Naive thymus-derived CD8-positive, alpha-beta T cell (primary cell): ENCODE measurements at regions of chr6 and their contacts with region 1.

Region 1: GRCh38 chr6:35731736-35732532 is 4.9 kb upstream of the ARMC12 start:
- DNase-seq: peak; percentile 85 to 97 (median 95)
- ATAC-seq: peak; percentile 48 to 54
- H3K4me3 Mint-ChIP-seq: peak overlapping the region; percentile 67 to 93 (median 90)
- H3K27ac Mint-ChIP-seq: peak overlapping the region; percentile 91 to 99 (median 97)
- H3K4me1 Mint-ChIP-seq: peaks cover 42 to 86% (median 84%) of the 10 kb centered on the region in 4 donors
- H3K27me3 Mint-ChIP-seq: no peaks in the 10 kb centered on the region

Region 2: DNA sequence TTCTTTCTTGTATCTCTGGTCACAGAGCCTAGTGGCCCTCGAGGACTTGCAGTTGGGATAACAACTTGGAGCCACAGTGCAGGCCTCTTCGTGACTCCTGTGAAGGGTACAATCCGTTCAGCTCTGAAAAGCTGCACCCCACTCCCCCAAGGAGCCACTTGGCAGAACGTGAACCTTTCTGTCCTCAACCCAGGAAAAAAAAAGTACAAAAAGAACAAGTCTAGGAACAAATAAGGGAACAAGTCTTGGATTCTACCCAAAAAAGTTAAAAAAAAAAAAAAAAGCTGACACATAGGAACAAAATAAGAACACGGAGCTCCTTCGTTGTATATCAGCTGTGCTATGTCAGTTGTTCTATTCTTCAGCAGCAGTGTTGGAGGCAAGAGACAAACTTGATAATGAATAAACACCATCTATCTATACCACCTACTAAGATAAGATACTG is 141.3 kb before region 1 on chr6:
- POLR2A ChIA-PET with region 1: interaction called, 12 read pairs
- DNase-seq: no peak
- ATAC-seq: no peak
- H3K4me3 Mint-ChIP-seq: peak overlapping the region in 9 of 10 donors; percentile 22 to 69 (median 44)
- H3K27ac Mint-ChIP-seq: peak overlapping the region; percentile 78 to 96 (median 94)
- H3K4me1 Mint-ChIP-seq: peaks cover 32 to 96% (median 91%) of the 10 kb centered on the region in 4 donors
- H3K27me3 Mint-ChIP-seq: no peaks in the 10 kb centered on the region

Region 3: GRCh38 chr6:35611240-35611639 is 120.7 kb before region 1 on chr6:
- POLR2A ChIA-PET with region 1: interaction called, 12 read pairs
- DNase-seq: peak in 4 of 10 donors; percentile 54 to 68 (median 62)
- ATAC-seq: peak; percentile 76 to 92
- H3K4me3 Mint-ChIP-seq: peak overlapping the region; percentile 52 to 85 (median 72)
- H3K27ac Mint-ChIP-seq: peak overlapping the region; percentile 88 to 97 (median 92)
- H3K4me1 Mint-ChIP-seq: peaks cover 33 to 89% (median 78%) of the 10 kb centered on the region in 4 donors
- H3K27me3 Mint-ChIP-seq: no peaks in the 10 kb centered on the region

Region 4: GRCh38 chr6:35642471-35643161 is 89.3 kb before region 1 on chr6:
- POLR2A ChIA-PET with region 1: interaction called, 10 read pairs
- DNase-seq: peak in 5 of 10 donors; percentile 17 to 65 (median 43)
- ATAC-seq: peak; percentile 84 to 93
- H3K4me3 Mint-ChIP-seq: peak overlapping the region in 5 of 10 donors; percentile 9 to 42 (median 30)
- H3K27ac Mint-ChIP-seq: peak overlapping the region; percentile 11 to 92 (median 81)
- H3K4me1 Mint-ChIP-seq: peaks cover 29 to 79% (median 67%) of the 10 kb centered on the region in 4 donors
- H3K27me3 Mint-ChIP-seq: no peaks in the 10 kb centered on the region

Region 5: DNA sequence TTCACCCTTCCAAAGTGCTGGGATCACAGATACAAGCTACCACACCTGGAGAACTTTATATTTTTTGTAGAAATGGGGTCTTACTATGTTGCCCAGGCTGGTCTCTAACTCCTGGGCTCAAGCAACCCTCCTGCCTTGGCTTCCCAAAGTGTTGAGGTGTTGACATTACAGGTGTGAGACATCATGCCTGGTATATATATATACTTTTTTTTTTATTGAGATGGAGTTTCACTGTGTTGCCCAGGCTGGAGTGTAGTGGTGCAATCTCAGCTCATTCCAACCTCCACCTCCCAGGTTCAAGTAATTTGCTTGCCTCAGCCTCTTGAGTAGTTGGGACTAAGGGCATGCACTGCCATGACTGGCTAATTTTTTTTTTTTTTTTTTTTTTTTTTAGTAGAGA is 48.7 kb before region 1 on chr6:
- POLR2A ChIA-PET with region 1: interaction called, 36 read pairs
- DNase-seq: no peak
- ATAC-seq: no peak
- H3K4me3 Mint-ChIP-seq: peak overlapping the region in 5 of 10 donors; percentile 19 to 51 (median 33)
- H3K27ac Mint-ChIP-seq: peak overlapping the region in 7 of 10 donors; percentile 39 to 94 (median 66)
- H3K4me1 Mint-ChIP-seq: peaks cover 16 to 54% (median 46%) of the 10 kb centered on the region in 4 donors
- H3K27me3 Mint-ChIP-seq: no peaks in the 10 kb centered on the region

Region 6: GRCh38 chr6:35719830-35720733 is 11.9 kb before region 1 on chr6:
- POLR2A ChIA-PET with region 1: interaction called, 142 read pairs
- DNase-seq: peak in 3 of 10 donors; percentile 17 to 37 (median 31)
- ATAC-seq: peak; percentile 61 to 65
- H3K4me3 Mint-ChIP-seq: peak overlapping the region; percentile 51 to 86 (median 72)
- H3K27ac Mint-ChIP-seq: peak overlapping the region; percentile 71 to 96 (median 88)
- H3K4me1 Mint-ChIP-seq: peaks cover 46 to 91% (median 83%) of the 10 kb centered on the region in 4 donors
- H3K27me3 Mint-ChIP-seq: no peaks in the 10 kb centered on the region

Region 7: DNA sequence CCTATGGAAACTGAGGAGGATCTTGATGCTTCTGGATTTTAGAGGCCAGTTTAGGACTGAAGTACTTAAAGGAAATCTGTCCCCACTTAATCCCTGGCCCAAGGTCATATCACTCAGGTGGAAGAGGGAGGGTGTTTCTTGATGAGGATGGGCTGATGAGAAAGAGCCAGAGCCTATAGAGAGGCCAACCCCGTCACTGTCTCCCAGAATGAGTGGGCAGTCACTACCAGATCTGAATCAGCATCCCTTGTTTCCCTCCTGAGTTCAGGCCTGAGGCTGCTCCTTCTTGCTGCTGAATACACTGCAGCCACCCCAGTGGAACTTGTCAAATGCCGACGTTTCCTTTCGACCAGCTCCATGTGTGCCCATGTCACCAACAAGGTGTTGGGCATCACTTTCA is 19.7 kb after region 1 on chr6:
- POLR2A ChIA-PET with region 1: no interaction called
- DNase-seq: no peak
- ATAC-seq: no peak
- H3K4me3 Mint-ChIP-seq: no peak overlapping the region
- H3K27ac Mint-ChIP-seq: no peak overlapping the region
- H3K4me1 Mint-ChIP-seq: peaks cover 0 to 3% (median 0%) of the 10 kb centered on the region in 4 donors
- H3K27me3 Mint-ChIP-seq: peaks cover 0 to 2% (median 0%) of the 10 kb centered on the region in 5 donors

Region 8: GRCh38 chr6:35776364-35777215 is 44.7 kb after region 1 on chr6 and contains the start of gene CLPSL2:
- POLR2A ChIA-PET with region 1: no interaction called
- DNase-seq: no peak
- ATAC-seq: peak in 1 of 2 donors; percentile 65
- H3K4me3 Mint-ChIP-seq: peak within 1 kb of the TSS; percentile 59 to 87 (median 76)
- H3K27ac Mint-ChIP-seq: peak within 1 kb of the TSS in 2 of 10 donors; percentile 40 to 70
- H3K4me1 Mint-ChIP-seq: peaks cover 0 to 13% (median 13%) of the 10 kb centered on the region in 4 donors
- H3K27me3 Mint-ChIP-seq: peaks cover 18 to 48% (median 24%) of the 10 kb centered on the region in 5 donors
- polyA plus RNA-seq, gene CLPSL2: not detected